ENCODE measurements at regions of chr1 and their contacts with region 1.

Region 1: DNA sequence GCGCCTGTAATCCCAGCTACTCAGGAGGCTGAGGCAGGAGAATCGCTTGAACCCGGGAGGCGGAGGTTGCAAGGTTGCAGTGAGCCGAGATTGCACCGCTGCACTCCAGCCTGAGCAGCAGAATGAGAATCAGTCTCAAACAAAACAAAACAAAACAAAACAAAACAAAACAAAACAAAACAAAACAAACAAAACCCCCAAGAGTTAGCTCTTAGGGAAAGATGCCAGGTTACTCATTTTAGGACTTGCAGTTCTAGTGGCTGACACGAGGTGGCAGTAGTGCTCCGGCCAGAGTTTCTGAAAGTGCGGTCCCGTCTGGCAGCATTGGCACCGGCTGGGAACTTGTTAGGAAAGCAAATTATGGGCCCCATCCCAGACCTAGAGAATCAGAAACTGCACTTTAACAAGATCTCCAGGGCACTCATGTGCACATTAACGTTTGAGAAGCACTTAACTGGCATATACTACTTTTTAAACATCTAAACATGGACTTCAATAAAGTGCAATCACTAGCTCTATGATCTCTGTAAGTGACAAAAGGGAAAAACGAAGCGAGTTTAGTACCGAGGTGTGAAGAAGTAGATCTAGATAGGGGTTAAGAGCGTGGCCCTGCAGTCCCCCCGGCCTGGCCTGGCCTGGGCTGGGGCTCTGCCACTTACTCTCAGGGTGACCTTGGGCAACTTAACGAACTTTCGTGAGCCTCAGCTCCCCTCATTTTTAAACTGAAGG is 41.9 kb upstream of the TNFRSF1B start:
- DNase-seq: peak; percentile 77
- H3K4me3 ChIP-seq: peak overlapping the region in 1 of 2 experiments; percentile 14; a peak in 1 of 4 replicates
- H3K27ac ChIP-seq: no peak overlapping the region
- H3K4me1 ChIP-seq: no peaks in the 10 kb centered on the region
- H3K27me3 ChIP-seq: peaks cover 3% of the 10 kb centered on the region; the same call in 1 of the 2 replicates
- CTCF ChIP-seq: peak; percentile 95
- EP300 ChIP-seq: no peak
- RAD21 ChIP-seq: peak; percentile 99

Region 2: DNA sequence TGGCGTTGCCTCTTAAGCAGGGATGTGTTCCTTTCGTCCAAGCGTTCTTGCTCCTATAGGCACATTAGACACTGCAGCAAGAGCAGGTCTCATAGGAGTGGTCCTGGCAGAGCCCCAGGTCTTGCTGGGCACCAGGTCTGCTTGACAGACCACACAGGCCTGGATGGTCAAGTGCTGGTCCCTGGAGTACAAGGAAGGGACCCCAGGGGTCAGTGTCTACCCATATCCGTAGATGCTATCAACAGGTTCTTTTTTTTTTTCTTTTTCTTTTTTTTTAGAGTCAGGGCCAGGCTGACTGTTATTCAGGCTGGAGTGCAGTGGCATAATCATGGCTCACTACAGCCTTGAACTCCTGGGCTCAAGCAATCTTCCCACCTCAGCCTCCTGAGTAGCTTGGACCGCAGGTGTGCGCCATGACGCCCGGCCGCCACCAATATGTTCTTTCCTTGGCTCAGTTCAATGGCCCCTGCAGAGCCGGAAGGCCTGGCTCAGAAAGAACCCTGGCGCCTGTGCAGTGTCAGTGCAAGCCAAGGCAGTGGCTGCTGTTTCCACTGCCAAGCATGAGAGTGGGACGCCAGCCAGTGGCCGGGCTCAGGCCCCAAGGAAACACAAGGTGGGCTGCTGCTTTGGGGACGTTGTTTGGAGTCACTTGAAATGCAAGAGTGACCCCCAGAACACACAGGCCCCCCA is 71.7 kb before region 1 on chr1:
- CTCF ChIA-PET with region 1: no interaction called
- POLR2A ChIA-PET with region 1: no interaction called
- DNase-seq: no peak
- H3K4me3 ChIP-seq: no peak overlapping the region; a peak in 1 of 4 replicates
- H3K27ac ChIP-seq: peak overlapping the region in 1 of 2 experiments; percentile 12; a peak in 1 of 4 replicates
- H3K4me1 ChIP-seq: peaks cover 0 to 22% of the 10 kb centered on the region in 2 experiments; a peak in 2 of 4 replicates
- H3K27me3 ChIP-seq: no peaks in the 10 kb centered on the region; the same call in 1 of the 2 replicates
- CTCF ChIP-seq: no peak
- EP300 ChIP-seq: no peak
- RAD21 ChIP-seq: no peak

Region 3: GRCh38 chr1:12078938-12079861 is 45.7 kb before region 1 on chr1:
- CTCF ChIA-PET with region 1: interaction called, 10 read pairs
- POLR2A ChIA-PET with region 1: no interaction called
- DNase-seq: peak; percentile 74
- H3K4me3 ChIP-seq: no peak overlapping the region
- H3K27ac ChIP-seq: no peak overlapping the region
- H3K4me1 ChIP-seq: no peaks in the 10 kb centered on the region
- H3K27me3 ChIP-seq: no peaks in the 10 kb centered on the region
- CTCF ChIP-seq: peak; percentile 60
- EP300 ChIP-seq: no peak
- RAD21 ChIP-seq: peak; percentile 59

Region 4: GRCh38 chr1:12113433-12114339 is 11.2 kb before region 1 on chr1:
- CTCF ChIA-PET with region 1: interaction called, 55 read pairs
- POLR2A ChIA-PET with region 1: no interaction called
- DNase-seq: no peak
- H3K4me3 ChIP-seq: no peak overlapping the region
- H3K27ac ChIP-seq: no peak overlapping the region
- H3K4me1 ChIP-seq: no peaks in the 10 kb centered on the region
- H3K27me3 ChIP-seq: no peaks in the 10 kb centered on the region
- CTCF ChIP-seq: no peak
- EP300 ChIP-seq: no peak
- RAD21 ChIP-seq: no peak

Region 5: GRCh38 chr1:12159816-12160215 is 35.0 kb after region 1 on chr1:
- CTCF ChIA-PET with region 1: interaction called, 37 read pairs
- POLR2A ChIA-PET with region 1: no interaction called
- DNase-seq: no peak
- H3K4me3 ChIP-seq: no peak overlapping the region
- H3K27ac ChIP-seq: no peak overlapping the region
- H3K4me1 ChIP-seq: peaks cover 0 to 8% of the 10 kb centered on the region in 2 experiments; a peak in 1 of 4 replicates
- H3K27me3 ChIP-seq: no peaks in the 10 kb centered on the region
- CTCF ChIP-seq: no peak
- EP300 ChIP-seq: no peak
- RAD21 ChIP-seq: no peak

Region 6: DNA sequence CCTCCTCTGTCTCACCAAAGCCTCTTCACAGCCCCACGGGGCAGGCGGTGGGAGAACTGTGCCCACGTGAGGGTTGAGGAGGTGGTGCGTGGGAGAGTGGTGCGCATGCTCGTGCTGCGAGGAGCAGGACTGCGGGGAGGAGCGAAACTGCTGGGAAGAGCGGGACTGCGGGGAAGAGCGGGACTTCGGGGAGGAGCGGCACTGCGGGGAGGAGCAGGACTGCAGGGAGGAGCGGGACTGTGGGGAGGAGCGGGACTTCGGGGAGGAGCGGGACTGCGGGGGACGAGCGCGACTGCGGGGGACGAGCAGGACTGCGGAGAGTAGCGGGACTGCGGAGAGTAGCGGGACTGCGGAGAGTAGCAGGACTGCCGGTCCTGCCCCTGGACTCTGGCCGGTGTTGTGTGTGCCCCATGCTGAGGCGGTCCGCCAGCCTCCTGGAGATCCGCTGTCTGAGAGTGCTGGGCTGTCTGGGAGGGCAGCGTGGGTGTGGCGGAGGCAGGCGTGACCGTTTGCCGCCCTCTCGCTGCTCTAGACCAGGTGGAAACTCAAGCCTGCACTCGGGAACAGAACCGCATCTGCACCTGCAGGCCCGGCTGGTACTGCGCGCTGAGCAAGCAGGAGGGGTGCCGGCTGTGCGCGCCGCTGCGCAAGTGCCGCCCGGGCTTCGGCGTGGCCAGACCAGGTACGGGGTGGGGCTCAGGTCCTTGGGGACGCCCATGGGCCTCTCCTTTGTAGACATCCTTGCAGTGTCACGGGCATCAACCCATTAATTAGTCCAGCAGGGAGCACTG is 66.6 kb after region 1 on chr1:
- CTCF ChIA-PET with region 1: interaction called, 137 read pairs
- POLR2A ChIA-PET with region 1: no interaction called
- DNase-seq: no peak
- H3K4me3 ChIP-seq: no peak overlapping the region
- H3K27ac ChIP-seq: no peak overlapping the region
- H3K4me1 ChIP-seq: peaks cover 0 to 6% of the 10 kb centered on the region in 2 experiments; a peak in 1 of 4 replicates
- H3K27me3 ChIP-seq: no peaks in the 10 kb centered on the region
- CTCF ChIP-seq: no peak
- EP300 ChIP-seq: no peak
- RAD21 ChIP-seq: no peak

Region 7: DNA sequence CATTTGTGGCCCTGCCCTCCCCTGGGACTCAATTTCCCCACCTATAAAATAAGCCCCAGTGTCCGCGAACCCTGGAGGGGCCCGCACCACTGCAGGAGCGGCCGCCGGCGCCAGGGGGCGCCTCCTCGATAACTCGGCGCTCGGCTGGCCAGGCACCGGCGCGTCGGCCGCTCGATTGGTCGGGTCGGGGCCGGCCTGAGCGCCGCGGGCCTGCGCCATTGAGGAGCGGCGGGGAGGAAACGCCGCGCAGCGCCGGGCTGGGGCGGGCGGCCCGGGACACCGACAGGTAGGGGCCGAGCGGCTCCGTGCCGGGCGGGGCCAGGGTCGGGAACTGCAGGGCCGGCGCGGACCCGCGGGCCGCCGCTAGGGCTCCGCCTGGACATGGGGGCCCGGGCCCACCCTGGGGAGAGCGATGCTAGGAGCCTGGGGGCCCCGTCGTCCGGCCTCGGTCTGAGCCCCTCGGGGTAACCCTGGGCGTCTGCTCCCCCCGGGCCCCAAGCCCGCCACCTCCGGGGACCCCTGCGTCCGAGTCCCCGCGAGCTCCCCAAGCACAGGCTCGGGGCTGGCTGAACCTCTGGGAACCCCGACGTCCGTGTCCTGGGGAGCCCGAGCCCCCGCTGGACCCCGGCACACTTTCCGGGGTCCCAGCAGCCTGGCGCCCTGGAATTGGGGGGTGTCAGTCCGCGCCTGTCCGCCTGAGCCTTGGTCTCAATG is 105.1 kb after region 1 on chr1 and contains the start of gene VPS13D:
- CTCF ChIA-PET with region 1: interaction called, 45 read pairs
- POLR2A ChIA-PET with region 1: no interaction called
- DNase-seq: peak; percentile 96
- H3K4me3 ChIP-seq: peak within 1 kb of the TSS; percentile 76 to 85
- H3K27ac ChIP-seq: peak within 1 kb of the TSS in 1 of 2 experiments; percentile 43; a peak in 1 of 4 replicates
- H3K4me1 ChIP-seq: peaks cover 6 to 7% of the 10 kb centered on the region in 2 experiments; a peak in 2 of 4 replicates
- H3K27me3 ChIP-seq: no peaks in the 10 kb centered on the region
- CTCF ChIP-seq: peak; percentile 85
- EP300 ChIP-seq: no peak; a peak in 1 of 4 replicates
- RAD21 ChIP-seq: peak; percentile 17; the same call in 1 of the 2 replicates
- polyA plus RNA-seq, gene VPS13D: 14.4 and 15.0 TPM in 2 replicates

Measured in SK-N-SH (cell line).